OCI-LY7 (cell line): ENCODE measurements at regions of chr21 and their contacts with region 1.

Region 1: GRCh38 chr21:45130324-45130774 is 56.0 kb downstream of the ADARB1 start:
- DNase-seq: no peak
- H3K4me3 ChIP-seq: no peak overlapping the region
- H3K27ac ChIP-seq: no peak overlapping the region
- H3K4me1 ChIP-seq: peaks cover 22% of the 10 kb centered on the region
- CTCF ChIP-seq: no peak

Region 2: DNA sequence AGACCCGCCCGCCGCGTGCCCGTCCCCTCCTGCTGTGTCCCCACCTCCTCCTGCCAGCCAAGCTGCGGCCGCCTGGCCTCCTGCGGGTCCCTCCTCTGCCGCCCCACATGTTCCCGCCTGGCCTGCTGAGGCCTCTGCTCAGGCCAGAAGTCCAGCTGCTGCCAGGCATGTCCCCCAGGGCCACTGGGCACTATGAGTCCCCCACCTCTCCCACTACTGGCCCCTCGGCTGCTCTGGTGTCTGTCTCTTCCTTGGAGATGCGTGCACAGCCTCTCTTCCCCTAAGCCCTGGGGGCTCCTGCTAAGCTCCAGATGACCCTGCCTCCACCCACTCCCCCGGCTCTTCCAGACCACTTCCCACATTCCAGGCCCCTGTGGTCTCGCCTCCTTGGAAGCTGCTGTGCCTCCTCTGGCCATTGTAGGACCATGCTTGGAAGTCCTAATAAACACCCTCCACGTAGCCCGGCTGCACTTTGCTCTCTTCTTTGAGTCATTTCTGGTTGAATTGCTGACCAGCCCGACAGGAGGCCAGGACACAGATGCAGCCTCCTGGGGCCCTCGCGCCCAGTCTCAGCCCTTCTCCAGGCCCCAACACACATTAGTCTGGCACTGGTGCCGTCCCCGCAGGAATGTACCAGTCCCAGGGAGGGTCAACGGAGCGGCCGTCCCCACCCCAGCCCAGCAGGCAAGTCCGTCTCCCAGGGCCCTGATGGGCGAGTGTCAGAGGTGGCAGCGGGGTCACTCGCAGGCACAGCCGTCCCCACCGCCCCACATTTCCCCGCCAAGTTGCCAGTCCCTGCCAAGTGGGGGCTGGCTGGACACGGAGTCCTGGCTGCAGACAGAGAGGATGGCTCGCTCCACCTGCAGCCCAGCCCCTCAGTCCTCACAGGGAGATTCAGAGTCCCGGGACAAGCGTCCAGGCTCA is 432.3 kb before region 1 on chr21:
- CTCF ChIA-PET with region 1: no interaction called
- POLR2A ChIA-PET with region 1: no interaction called
- intact Hi-C with region 1: no loop called
- DNase-seq: no peak
- H3K4me3 ChIP-seq: no peak overlapping the region
- H3K27ac ChIP-seq: no peak overlapping the region
- H3K4me1 ChIP-seq: no peaks in the 10 kb centered on the region
- CTCF ChIP-seq: no peak

Region 3: GRCh38 chr21:44949779-44950198 is 180.6 kb before region 1 on chr21:
- CTCF ChIA-PET with region 1: interaction called, 6 read pairs
- POLR2A ChIA-PET with region 1: interaction called, 3 read pairs
- intact Hi-C with region 1: loop called (anchors 2 kb)
- DNase-seq: peak; percentile 63
- H3K4me3 ChIP-seq: no peak overlapping the region
- H3K27ac ChIP-seq: no peak overlapping the region
- H3K4me1 ChIP-seq: no peaks in the 10 kb centered on the region
- CTCF ChIP-seq: peak; percentile 82

Region 4: GRCh38 chr21:45098867-45099266 is 31.5 kb before region 1 on chr21:
- CTCF ChIA-PET with region 1: interaction called, 21 read pairs
- POLR2A ChIA-PET with region 1: interaction called, 11 read pairs
- intact Hi-C with region 1: loop called (anchors 1 kb)
- DNase-seq: peak; percentile 56
- H3K4me3 ChIP-seq: no peak overlapping the region
- H3K27ac ChIP-seq: no peak overlapping the region
- H3K4me1 ChIP-seq: peaks cover 13% of the 10 kb centered on the region
- CTCF ChIP-seq: peak; percentile 82

Region 5: GRCh38 chr21:45109831-45110492 is 20.4 kb before region 1 on chr21:
- CTCF ChIA-PET with region 1: interaction called, 14 read pairs
- POLR2A ChIA-PET with region 1: interaction called, 116 read pairs
- intact Hi-C with region 1: loop called (anchors 1 kb)
- DNase-seq: peak; percentile 95
- H3K4me3 ChIP-seq: peak overlapping the region; percentile 44
- H3K27ac ChIP-seq: peak overlapping the region; percentile 81
- H3K4me1 ChIP-seq: peaks cover 69% of the 10 kb centered on the region
- CTCF ChIP-seq: peak; percentile 49; the same call in 1 of the 2 replicates